ENCODE measurements at regions of chr1 and their contacts with region 1.

Region 1: GRCh38 chr1:211017075-211017748 is 116.7 kb downstream of the KCNH1 start:
- DNase-seq: peak; percentile 6
- ATAC-seq: no peak
- H3K4me3 ChIP-seq: no peak overlapping the region
- H3K27ac ChIP-seq: no peak overlapping the region
- H3K4me1 ChIP-seq: no peaks in the 10 kb centered on the region
- H3K27me3 ChIP-seq: no peaks in the 10 kb centered on the region
- CTCF ChIP-seq: no peak
- POLR2A ChIP-seq: no peak
- RAD21 ChIP-seq: no peak

Region 2: GRCh38 chr1:211613093-211613947 is 596.1 kb after region 1 on chr1:
- CTCF ChIA-PET with region 1: no interaction called
- POLR2A ChIA-PET with region 1: interaction called, 12 read pairs
- dilution Hi-C with region 1: no loop called
- in situ Hi-C with region 1: no loop called
- intact Hi-C with region 1: no loop called
- DNase-seq: peak; percentile 94
- ATAC-seq: peak; percentile 99
- H3K4me3 ChIP-seq: no peak overlapping the region
- H3K27ac ChIP-seq: peak overlapping the region; percentile 85
- H3K4me1 ChIP-seq: peaks cover 9% of the 10 kb centered on the region
- H3K27me3 ChIP-seq: no peaks in the 10 kb centered on the region
- CTCF ChIP-seq: no peak
- POLR2A ChIP-seq: no peak
- RAD21 ChIP-seq: peak; percentile 8; the same call in 1 of the 2 replicates

Measured in IMR-90 (cell line).